GM12878 (cell line): ENCODE measurements at regions of chr10 and their contacts with region 1.

Region 1: DNA sequence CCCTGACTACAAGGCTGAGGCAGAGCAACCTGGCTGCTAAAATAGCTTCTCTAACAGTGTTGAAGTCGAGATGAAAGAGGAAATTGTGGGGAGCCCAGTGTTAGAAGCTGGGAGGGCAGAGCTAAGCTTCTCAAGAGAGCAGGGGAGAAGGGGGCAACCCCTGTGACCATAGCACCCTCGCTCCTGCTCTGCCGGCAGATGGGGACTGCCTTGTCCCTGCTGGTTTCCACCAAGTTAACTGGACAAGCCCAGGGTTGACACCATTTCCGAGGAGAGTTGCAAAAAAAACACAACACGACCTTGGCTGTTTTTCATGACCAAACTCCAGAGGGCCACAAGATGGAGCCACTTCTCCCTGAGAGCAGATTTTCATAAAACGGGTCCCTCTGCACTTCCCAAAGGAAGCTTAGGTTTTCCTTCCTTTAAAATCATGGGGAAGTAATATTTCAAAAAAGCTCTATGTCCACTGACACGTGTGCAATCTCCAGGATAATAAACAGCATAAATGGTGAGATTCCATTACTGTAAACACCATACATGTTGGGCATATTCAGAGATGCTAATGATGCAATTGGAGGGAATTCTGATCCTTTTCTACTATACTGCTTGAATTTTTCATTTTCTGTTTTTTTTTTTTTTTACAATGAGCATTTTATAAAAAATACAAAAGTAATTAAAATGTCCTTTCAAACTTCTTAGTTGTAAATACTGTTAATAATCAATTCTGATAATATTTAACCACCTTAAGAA is 140.4 kb downstream of the PIP4K2A start:
- DNase-seq: no peak
- ATAC-seq: peak; percentile 76
- H3K4me3 ChIP-seq: no peak overlapping the region
- H3K27ac ChIP-seq: 0 out of 2 replicates have a peak overlapping the region, but pooled peaks have one; percentile 49
- H3K4me1 ChIP-seq: 0 out of 2 replicates have a peak, but pooled peaks cover 2% of the 10 kb centered on the region
- H3K27me3 ChIP-seq: no peaks in the 10 kb centered on the region
- CTCF ChIP-seq: peak; percentile 57 to 66 (median 63)
- EP300 ChIP-seq: no peak
- POLR2A ChIP-seq: no peak
- RAD21 ChIP-seq: peak; percentile 84

Region 2: GRCh38 chr10:22133749-22134624 is 440.0 kb before region 1 on chr10:
- CTCF ChIA-PET with region 1: no interaction called
- POLR2A ChIA-PET with region 1: no interaction called
- RAD21 ChIA-PET with region 1: no interaction called
- SMC1A ChIA-PET with region 1: no interaction called
- in situ Hi-C with region 1: no loop called
- intact Hi-C with region 1: no loop called
- DNase-seq: no peak
- ATAC-seq: peak; percentile 30; the same call in 1 of the 3 replicates
- H3K4me3 ChIP-seq: no peak overlapping the region
- H3K27ac ChIP-seq: no peak overlapping the region; the same call in 1 of the 2 replicates
- H3K4me1 ChIP-seq: no peaks in the 10 kb centered on the region
- H3K27me3 ChIP-seq: no peaks in the 10 kb centered on the region
- CTCF ChIP-seq: no peak
- EP300 ChIP-seq: no peak
- POLR2A ChIP-seq: no peak
- RAD21 ChIP-seq: no peak

Region 3: GRCh38 chr10:22285130-22285529 is 288.9 kb before region 1 on chr10:
- CTCF ChIA-PET with region 1: no interaction called
- POLR2A ChIA-PET with region 1: no interaction called
- RAD21 ChIA-PET with region 1: no interaction called
- SMC1A ChIA-PET with region 1: no interaction called
- in situ Hi-C with region 1: no loop called
- intact Hi-C with region 1: no loop called
- DNase-seq: no peak
- ATAC-seq: no peak
- H3K4me3 ChIP-seq: no peak overlapping the region
- H3K27ac ChIP-seq: no peak overlapping the region
- H3K4me1 ChIP-seq: no peaks in the 10 kb centered on the region
- H3K27me3 ChIP-seq: no peaks in the 10 kb centered on the region; a peak in 1 of 4 replicates
- CTCF ChIP-seq: no peak
- EP300 ChIP-seq: no peak
- POLR2A ChIP-seq: no peak
- RAD21 ChIP-seq: no peak

Region 4: DNA sequence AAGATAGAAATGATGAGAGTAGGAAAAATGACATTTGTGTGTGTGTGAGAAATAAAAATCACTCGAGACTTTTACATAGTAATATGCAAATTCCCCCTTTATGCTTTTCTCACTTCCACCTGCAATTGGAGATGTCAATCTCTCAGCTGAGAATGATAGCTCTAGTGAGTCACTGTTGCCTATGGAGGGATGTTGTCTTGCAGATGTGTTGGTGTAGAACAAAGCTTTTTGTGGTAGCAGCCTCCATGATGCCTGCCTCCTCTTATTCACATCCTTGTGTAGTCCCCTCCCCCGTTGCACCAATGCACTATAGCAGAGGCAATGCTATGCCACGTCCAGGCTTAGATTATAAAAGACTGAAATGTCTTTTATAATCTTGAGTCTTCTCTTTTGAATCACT is 194.9 kb before region 1 on chr10:
- CTCF ChIA-PET with region 1: no interaction called
- POLR2A ChIA-PET with region 1: no interaction called
- RAD21 ChIA-PET with region 1: no interaction called
- SMC1A ChIA-PET with region 1: no interaction called
- in situ Hi-C with region 1: no loop called
- intact Hi-C with region 1: no loop called
- DNase-seq: peak; percentile 39
- ATAC-seq: peak; percentile 82
- H3K4me3 ChIP-seq: peak overlapping the region; percentile 47; the same call in 1 of the 2 replicates
- H3K27ac ChIP-seq: peak overlapping the region; percentile 92
- H3K4me1 ChIP-seq: peaks cover 20% of the 10 kb centered on the region
- H3K27me3 ChIP-seq: no peaks in the 10 kb centered on the region
- CTCF ChIP-seq: no peak
- EP300 ChIP-seq: no peak
- POLR2A ChIP-seq: no peak
- RAD21 ChIP-seq: no peak

Region 5: GRCh38 chr10:22589851-22590514 is 16.0 kb after region 1 on chr10:
- CTCF ChIA-PET with region 1: interaction called, 28 read pairs
- POLR2A ChIA-PET with region 1: interaction called, 3 read pairs
- RAD21 ChIA-PET with region 1: interaction called, 3 read pairs
- SMC1A ChIA-PET with region 1: interaction called, 32 read pairs
- in situ Hi-C with region 1: no loop called
- intact Hi-C with region 1: no loop called
- DNase-seq: no peak
- ATAC-seq: no peak
- H3K4me3 ChIP-seq: no peak overlapping the region
- H3K27ac ChIP-seq: no peak overlapping the region
- H3K4me1 ChIP-seq: no peaks in the 10 kb centered on the region
- H3K27me3 ChIP-seq: no peaks in the 10 kb centered on the region
- CTCF ChIP-seq: no peak
- EP300 ChIP-seq: no peak
- POLR2A ChIP-seq: no peak
- RAD21 ChIP-seq: no peak

Region 6: DNA sequence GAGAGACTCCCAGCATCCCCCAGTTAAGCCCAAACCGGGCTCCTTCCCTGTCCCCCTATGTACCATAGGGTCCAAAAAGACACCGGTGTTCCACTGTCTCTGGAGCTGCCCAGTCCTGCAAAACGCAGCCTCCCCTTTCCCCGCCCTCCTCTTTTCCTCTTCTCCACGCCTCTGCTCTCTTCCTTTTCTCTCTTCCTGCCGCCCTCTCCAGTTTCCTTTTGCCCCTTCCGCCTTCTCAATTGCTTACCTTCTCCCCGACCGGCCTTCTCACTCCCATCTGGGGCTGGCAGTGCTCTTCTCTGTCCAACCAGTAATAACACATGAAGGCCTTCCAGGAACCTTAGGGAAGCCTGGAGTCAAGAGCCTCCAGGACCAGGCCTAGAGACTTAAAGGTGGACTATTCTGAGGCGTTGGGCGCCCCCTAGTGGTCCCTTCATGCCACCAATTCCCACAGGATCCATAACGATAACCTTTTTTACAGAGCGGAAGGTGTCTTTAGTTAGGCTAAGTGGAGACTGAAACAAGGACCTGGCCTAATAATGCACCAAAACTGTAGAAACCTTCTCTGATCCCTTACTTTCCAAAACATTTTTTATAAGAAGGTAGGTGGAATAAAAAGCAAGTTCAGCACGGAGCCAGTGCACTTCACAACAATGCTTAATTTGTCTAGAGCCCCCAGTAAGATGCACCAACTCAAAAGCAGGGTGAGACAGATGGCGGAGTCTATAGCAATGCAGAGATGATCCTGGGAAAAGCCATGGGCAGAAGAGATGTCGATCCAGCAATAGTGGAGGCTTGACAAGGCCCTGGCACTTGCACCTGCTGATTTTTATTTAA is 494.2 kb after region 1 on chr10:
- CTCF ChIA-PET with region 1: no interaction called
- POLR2A ChIA-PET with region 1: no interaction called
- RAD21 ChIA-PET with region 1: no interaction called
- SMC1A ChIA-PET with region 1: no interaction called
- in situ Hi-C with region 1: no loop called
- intact Hi-C with region 1: loop called (anchors 10 kb)
- DNase-seq: peak; percentile 27
- ATAC-seq: peak; percentile 84
- H3K4me3 ChIP-seq: no peak overlapping the region
- H3K27ac ChIP-seq: no peak overlapping the region
- H3K4me1 ChIP-seq: peaks cover 28% of the 10 kb centered on the region
- H3K27me3 ChIP-seq: no peaks in the 10 kb centered on the region
- CTCF ChIP-seq: peak; percentile 79 to 81 (median 80)
- EP300 ChIP-seq: no peak
- POLR2A ChIP-seq: no peak
- RAD21 ChIP-seq: peak; percentile 85